Activated T-helper 2 cell treated with anti-CD3 and anti-CD28 coated beads, Interferon-gamma antibody, Interleukin-2, Interleukin-4, amounts not matched to agents 10 μg/mL and 5 μg/mL and 100 μg/mL, durations not matched to agents 14 hours and 24 hours and 36 hours (primary cell): ENCODE measurements at regions of chr3 and their contacts with region 1.

Region 1: DNA sequence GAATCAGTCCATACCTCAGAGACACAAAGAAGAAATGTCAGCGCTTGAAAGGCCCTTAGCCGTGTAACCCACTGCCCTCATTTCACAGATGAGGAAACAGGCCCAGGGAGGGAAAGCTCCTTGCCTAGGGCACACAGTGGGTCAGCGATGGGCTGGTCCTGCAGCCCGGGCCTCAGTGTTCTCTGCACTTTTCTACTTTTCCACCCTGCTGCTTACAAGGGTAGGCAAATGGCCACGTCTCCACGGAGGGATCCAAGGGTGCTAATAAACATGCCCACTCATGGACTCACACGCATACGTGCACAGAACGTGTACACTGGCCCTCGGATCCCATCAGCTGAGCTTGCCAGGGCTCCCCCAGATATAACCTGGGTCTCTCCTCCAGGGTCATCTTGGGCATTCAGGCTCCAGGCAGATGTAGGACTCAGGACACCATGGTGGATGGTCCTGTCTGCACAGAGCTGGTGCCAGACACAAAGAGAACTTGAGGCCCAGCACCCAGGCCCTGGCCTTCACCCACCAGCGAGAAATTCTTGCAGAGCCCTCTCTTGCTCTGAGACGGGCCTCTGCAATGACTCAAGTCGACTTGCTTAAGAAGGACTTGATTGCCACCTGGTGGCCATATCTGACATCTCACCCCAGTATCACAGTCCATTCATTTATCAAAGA is 34.5 kb upstream of the VPS8 start:
- DNase-seq: peak; percentile 70
- H3K4me3 Mint-ChIP-seq: no peak overlapping the region
- H3K27ac Mint-ChIP-seq: no peak overlapping the region
- H3K4me1 Mint-ChIP-seq: no peaks in the 10 kb centered on the region
- H3K27me3 Mint-ChIP-seq: peaks cover 14% of the 10 kb centered on the region

Region 2: DNA sequence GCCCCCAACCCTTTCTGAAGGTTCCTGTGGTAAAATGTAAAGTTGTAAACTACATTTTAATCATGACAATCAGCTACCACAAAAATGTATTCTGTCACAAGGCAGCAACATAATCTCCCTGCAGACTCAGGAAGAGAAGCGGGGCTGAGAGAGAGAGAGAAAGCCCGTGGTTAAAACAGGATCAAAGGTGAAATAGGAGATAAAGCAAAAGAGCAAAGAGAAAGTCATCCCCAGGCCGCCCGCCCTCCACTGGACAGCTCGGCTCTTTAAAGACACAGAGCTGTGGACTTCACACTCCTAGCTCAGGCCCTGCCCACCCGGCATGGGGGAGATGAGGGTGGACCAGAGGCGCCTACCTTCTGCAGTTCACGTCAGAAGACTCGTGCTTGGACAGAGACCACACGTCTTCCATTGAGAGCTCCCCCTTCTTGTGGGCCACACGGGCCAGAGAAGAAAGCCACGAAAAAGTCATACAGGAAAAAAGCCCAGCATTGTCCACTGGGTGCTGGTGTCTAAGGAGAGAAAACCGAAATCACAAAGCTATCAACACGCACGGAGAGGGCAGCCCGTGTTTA is 789.2 kb before region 1 on chr3:
- intact Hi-C with region 1: no loop called
- DNase-seq: no peak
- H3K4me3 Mint-ChIP-seq: no peak overlapping the region
- H3K27ac Mint-ChIP-seq: no peak overlapping the region
- H3K4me1 Mint-ChIP-seq: peaks cover 15% of the 10 kb centered on the region
- H3K27me3 Mint-ChIP-seq: no peaks in the 10 kb centered on the region

Region 3: GRCh38 chr3:184727357-184728009 is 50.0 kb before region 1 on chr3:
- intact Hi-C with region 1: loop called (anchors 5 kb)
- DNase-seq: peak; percentile 17
- H3K4me3 Mint-ChIP-seq: no peak overlapping the region
- H3K27ac Mint-ChIP-seq: no peak overlapping the region
- H3K4me1 Mint-ChIP-seq: no peaks in the 10 kb centered on the region
- H3K27me3 Mint-ChIP-seq: peaks cover 18% of the 10 kb centered on the region